ENCODE measurements at regions of chr1 and their contacts with region 1.

Region 1: DNA sequence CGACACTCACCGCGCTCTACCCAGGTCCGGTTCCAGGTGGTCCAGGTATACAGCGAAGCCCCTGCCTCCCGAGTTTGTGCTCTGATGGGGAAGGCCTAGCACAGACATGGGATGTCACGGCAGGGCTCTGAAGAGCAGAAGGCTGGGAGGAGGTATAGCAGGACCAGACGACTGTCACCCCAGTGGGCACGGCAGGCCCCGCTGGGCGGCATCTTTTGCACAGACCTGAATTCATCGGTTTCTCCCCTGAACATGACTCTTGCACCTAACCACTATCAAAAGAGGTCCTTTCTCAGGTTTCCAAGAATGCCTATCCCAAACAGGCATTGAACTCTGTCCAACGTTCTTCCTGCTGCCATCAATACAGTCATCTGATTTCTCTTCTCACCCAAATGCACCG is 30.6 kb downstream of the ARHGEF16 start:
- DNase-seq: no peak
- H3K4me3 ChIP-seq: no peak overlapping the region
- H3K27ac ChIP-seq: no peak overlapping the region
- H3K4me1 ChIP-seq: peaks cover 0 to 7% (median 0%) of the 10 kb centered on the region in 6 donors
- H3K27me3 ChIP-seq: peaks cover 0 to 45% (median 6%) of the 10 kb centered on the region in 7 donors
- CTCF ChIP-seq: no peak
- POLR2A ChIP-seq: no peak

Region 2: GRCh38 chr1:3453203-3453761 is 31.7 kb before region 1 on chr1:
- intact Hi-C with region 1: loop called (anchors 5 kb)
- DNase-seq: peak; percentile 90
- H3K4me3 ChIP-seq: peak overlapping the region in 1 of 8 donors; percentile 76
- H3K27ac ChIP-seq: no peak overlapping the region
- H3K4me1 ChIP-seq: peaks cover 11 to 47% (median 28%) of the 10 kb centered on the region in 6 donors
- H3K27me3 ChIP-seq: peaks cover 0 to 65% (median 25%) of the 10 kb centered on the region in 7 donors
- CTCF ChIP-seq: peak; percentile 82 to 96 (median 94)
- POLR2A ChIP-seq: no peak

Measured in spleen (tissue), 13 donors.